ENCODE measurements at regions of chr5 and their contacts with region 1.

Region 1: DNA sequence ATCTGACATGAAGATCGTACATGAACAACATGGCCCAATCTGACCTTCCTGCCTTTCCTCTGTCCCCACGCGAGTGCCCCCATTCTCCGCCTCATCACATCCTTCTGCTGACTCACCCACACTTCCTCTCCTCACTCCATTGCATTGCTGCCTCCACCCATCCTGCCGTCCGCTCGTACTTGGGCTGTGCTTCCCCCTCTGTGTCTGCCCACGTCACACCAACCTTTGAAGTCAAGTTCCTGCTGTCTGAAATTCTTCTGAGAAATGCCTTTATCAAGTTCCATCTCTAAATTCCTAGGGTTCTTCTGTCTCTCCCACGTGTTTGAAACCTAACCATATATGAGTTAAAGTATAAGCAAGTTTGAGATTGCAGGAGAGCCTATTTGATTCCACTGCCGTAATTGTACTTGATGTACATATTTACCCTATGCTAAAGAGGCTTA is 18.0 kb upstream of the STARD4 start:
- DNase-seq: no peak
- H3K4me3 ChIP-seq: no peak overlapping the region
- H3K27ac ChIP-seq: no peak overlapping the region
- H3K27me3 ChIP-seq: no peaks in the 10 kb centered on the region
- CTCF ChIP-seq: no peak

Region 2: GRCh38 chr5:111495159-111495558 is 35.2 kb before region 1 on chr5:
- CTCF ChIA-PET with region 1: interaction called, 14 read pairs
- POLR2A ChIA-PET with region 1: no interaction called
- DNase-seq: no peak
- H3K4me3 ChIP-seq: no peak overlapping the region
- H3K27ac ChIP-seq: no peak overlapping the region
- H3K27me3 ChIP-seq: no peaks in the 10 kb centered on the region
- CTCF ChIP-seq: no peak

Region 3: GRCh38 chr5:111512375-111513130 is 17.8 kb before region 1 on chr5 and contains the start of gene STARD4:
- CTCF ChIA-PET with region 1: interaction called, 61 read pairs
- POLR2A ChIA-PET with region 1: no interaction called
- DNase-seq: peak; percentile 77
- H3K4me3 ChIP-seq: peak within 1 kb of the TSS; percentile 97
- H3K27ac ChIP-seq: peak within 1 kb of the TSS; percentile 87
- H3K27me3 ChIP-seq: no peaks in the 10 kb centered on the region
- CTCF ChIP-seq: no peak
- polyA plus RNA-seq, gene STARD4: 20.1 and 24.3 TPM in 2 replicates

Region 4: GRCh38 chr5:111556501-111556900 is 26.2 kb after region 1 on chr5:
- CTCF ChIA-PET with region 1: interaction called, 62 read pairs
- POLR2A ChIA-PET with region 1: no interaction called
- DNase-seq: no peak
- H3K4me3 ChIP-seq: no peak overlapping the region
- H3K27ac ChIP-seq: no peak overlapping the region
- H3K27me3 ChIP-seq: no peaks in the 10 kb centered on the region
- CTCF ChIP-seq: no peak

Region 5: GRCh38 chr5:111735583-111736270 is 205.4 kb after region 1 on chr5:
- CTCF ChIA-PET with region 1: interaction called, 10 read pairs
- POLR2A ChIA-PET with region 1: interaction called, 4 read pairs
- DNase-seq: peak; percentile 92
- H3K4me3 ChIP-seq: no peak overlapping the region
- H3K27ac ChIP-seq: peak overlapping the region; percentile 33
- H3K27me3 ChIP-seq: no peaks in the 10 kb centered on the region
- CTCF ChIP-seq: no peak

Region 6: GRCh38 chr5:112146323-112147226 is 616.3 kb after region 1 on chr5:
- CTCF ChIA-PET with region 1: interaction called, 22 read pairs
- POLR2A ChIA-PET with region 1: no interaction called
- DNase-seq: peak; percentile 64
- H3K4me3 ChIP-seq: no peak overlapping the region
- H3K27ac ChIP-seq: peak overlapping the region; percentile 57
- H3K27me3 ChIP-seq: no peaks in the 10 kb centered on the region
- CTCF ChIP-seq: peak; percentile 76